ENCODE measurements at regions of chr3 and their contacts with region 1.

Region 1: GRCh38 chr3:100590114-100590839 is 19.1 kb upstream of the ADGRG7 start:
- DNase-seq: peak; percentile 73
- H3K4me3 Mint-ChIP-seq: no peak overlapping the region
- H3K27ac Mint-ChIP-seq: no peak overlapping the region
- H3K4me1 Mint-ChIP-seq: peaks cover 3% of the 10 kb centered on the region
- H3K27me3 Mint-ChIP-seq: no peaks in the 10 kb centered on the region

Region 2: GRCh38 chr3:100316641-100317069 is 273.6 kb before region 1 on chr3:
- CTCF ChIA-PET with region 1: interaction called, 46 read pairs
- DNase-seq: peak; percentile 55
- H3K4me3 Mint-ChIP-seq: no peak overlapping the region
- H3K27ac Mint-ChIP-seq: peak overlapping the region; percentile 38
- H3K4me1 Mint-ChIP-seq: peaks cover 19% of the 10 kb centered on the region
- H3K27me3 Mint-ChIP-seq: no peaks in the 10 kb centered on the region

Region 3: DNA sequence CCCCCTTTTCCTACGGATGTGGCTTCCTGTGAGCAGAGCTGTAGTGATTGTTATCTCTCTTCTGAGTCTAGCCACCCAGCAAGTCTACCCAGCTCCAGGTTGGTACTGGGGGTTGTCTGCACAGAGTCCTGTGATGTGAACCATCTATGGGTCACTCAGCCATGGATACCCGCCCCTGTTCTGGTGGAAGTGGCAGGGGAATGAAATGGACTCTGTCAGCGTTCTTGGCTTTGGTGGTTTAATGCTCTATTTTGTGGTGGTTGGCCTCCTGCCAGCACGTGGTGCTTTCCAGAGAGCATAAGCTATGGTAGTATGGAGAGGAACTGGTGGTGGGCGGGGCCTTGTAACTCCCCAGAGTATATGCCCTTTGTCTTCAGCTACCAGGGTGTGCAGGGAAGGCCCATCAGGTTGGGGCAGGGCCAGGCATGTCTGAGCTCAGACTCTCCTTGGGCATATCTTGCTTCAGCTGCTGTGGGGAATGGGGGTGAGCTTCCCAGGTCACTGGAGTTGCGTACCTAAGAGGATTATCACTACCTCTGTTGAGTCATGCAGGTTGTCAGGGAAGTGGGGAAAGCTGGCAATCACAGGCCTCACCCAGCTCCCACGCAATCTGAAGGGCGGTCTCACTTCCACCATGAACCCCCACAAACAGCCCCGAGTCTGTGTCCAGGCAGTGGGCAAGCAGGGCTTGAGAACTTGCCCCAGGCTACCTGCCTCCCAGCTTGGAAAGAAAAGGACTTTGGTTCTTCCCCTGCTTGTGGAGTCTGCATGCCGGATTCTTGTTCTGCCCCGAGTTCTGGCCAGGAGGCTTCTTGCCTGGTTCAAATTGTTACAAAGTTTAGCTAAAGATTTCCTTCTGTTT is 10.1 kb after region 1 on chr3:
- CTCF ChIA-PET with region 1: interaction called, 11 read pairs
- DNase-seq: peak; percentile 26
- H3K4me3 Mint-ChIP-seq: no peak overlapping the region
- H3K27ac Mint-ChIP-seq: peak overlapping the region; percentile 26
- H3K4me1 Mint-ChIP-seq: peaks cover 44% of the 10 kb centered on the region
- H3K27me3 Mint-ChIP-seq: peaks cover 18% of the 10 kb centered on the region

Measured in activated naive CD4-positive, alpha-beta T cell treated with anti-CD3 and anti-CD28 coated beads, Interleukin-2, amount 10 ng/mL, durations not matched to agents 7 days and 5 days (primary cell).